ENCODE measurements at regions of chr13 and their contacts with region 1.

Region 1: GRCh38 chr13:75876360-75877050 is 240.4 kb downstream of the LMO7 start:
- DNase-seq: no peak
- H3K4me3 ChIP-seq: no peak overlapping the region
- H3K27ac ChIP-seq: no peak overlapping the region
- H3K4me1 ChIP-seq: peaks cover 0 to 11% (median 6%) of the 10 kb centered on the region in 6 donors
- H3K27me3 ChIP-seq: peaks cover 0 to 6% (median 0%) of the 10 kb centered on the region in 7 donors
- CTCF ChIP-seq: peak; percentile 60 to 87 (median 83)
- POLR2A ChIP-seq: no peak

Region 2: GRCh38 chr13:75691183-75691582 is 185.3 kb before region 1 on chr13:
- intact Hi-C with region 1: loop called (anchors 10 kb)
- DNase-seq: no peak
- H3K4me3 ChIP-seq: no peak overlapping the region
- H3K27ac ChIP-seq: no peak overlapping the region
- H3K4me1 ChIP-seq: peaks cover 0 to 5% (median 4%) of the 10 kb centered on the region in 6 donors
- H3K27me3 ChIP-seq: no peaks in the 10 kb centered on the region
- CTCF ChIP-seq: no peak
- POLR2A ChIP-seq: no peak

Region 3: DNA sequence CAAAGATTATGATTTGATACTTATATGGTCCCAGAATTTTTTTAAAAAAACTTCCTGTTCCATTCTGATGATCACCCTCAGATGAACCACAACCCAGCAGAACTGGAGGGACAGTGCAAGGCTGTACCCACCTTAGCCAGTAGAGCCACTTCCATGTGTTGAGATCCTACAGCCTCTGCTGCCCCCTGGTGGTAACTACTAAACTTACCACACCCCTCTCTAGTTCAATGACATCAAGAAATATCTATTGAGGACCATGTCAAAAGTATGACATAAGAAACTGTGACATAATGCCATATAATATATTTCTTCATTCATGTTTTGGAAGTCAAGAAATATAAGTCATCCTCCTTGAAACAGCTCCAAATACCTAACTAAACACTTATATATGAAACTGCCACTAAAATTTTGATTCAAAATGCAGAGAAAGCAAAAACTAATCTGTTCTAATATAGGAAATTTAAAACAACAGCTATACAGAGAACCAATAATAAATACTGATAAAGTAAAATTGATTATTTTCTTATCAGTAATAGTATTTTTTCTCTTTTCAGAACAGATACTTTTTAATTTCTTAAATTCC is 597.1 kb after region 1 on chr13:
- intact Hi-C with region 1: loop called (anchors 5 kb)
- DNase-seq: no peak
- H3K4me3 ChIP-seq: no peak overlapping the region
- H3K27ac ChIP-seq: no peak overlapping the region
- H3K4me1 ChIP-seq: no peaks in the 10 kb centered on the region
- H3K27me3 ChIP-seq: no peaks in the 10 kb centered on the region
- CTCF ChIP-seq: peak; percentile 54 to 84 (median 75)
- POLR2A ChIP-seq: no peak

Region 4: DNA sequence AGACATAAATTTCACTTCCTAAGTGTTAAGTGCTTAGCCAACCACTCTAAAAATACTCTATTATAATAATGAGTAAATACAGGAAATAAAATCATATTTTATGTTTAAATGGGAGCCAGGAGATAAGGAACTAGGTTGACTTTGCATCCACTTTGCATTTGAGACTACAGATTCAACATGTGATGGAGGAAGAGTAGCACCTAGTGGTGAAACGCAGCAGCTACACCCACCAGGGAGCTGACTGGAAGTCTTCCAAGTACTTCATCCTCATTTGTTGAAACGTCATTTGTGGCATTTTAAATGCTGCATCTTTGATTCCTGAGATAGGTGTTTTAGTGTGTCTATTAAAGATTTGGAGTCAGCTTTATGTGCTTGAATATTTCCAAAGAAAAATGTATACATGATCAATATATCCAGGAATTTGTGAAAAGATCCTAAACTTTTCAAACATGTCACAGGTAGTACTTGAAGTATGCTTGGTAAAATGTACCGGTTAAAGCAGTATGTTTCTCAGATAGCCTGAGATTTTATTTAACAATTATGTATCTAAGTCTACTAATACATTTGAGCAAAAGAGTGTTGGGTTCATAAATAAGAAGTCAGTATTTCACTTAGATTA is 1027.1 kb after region 1 on chr13:
- intact Hi-C with region 1: loop called (anchors 5 kb)
- DNase-seq: peak; percentile 83
- H3K4me3 ChIP-seq: no peak overlapping the region
- H3K27ac ChIP-seq: no peak overlapping the region
- H3K4me1 ChIP-seq: peaks cover 0 to 8% (median 2%) of the 10 kb centered on the region in 6 donors
- H3K27me3 ChIP-seq: peaks cover 0 to 9% (median 0%) of the 10 kb centered on the region in 7 donors
- CTCF ChIP-seq: peak; percentile 91 to 98 (median 95)
- POLR2A ChIP-seq: no peak

Region 5: DNA sequence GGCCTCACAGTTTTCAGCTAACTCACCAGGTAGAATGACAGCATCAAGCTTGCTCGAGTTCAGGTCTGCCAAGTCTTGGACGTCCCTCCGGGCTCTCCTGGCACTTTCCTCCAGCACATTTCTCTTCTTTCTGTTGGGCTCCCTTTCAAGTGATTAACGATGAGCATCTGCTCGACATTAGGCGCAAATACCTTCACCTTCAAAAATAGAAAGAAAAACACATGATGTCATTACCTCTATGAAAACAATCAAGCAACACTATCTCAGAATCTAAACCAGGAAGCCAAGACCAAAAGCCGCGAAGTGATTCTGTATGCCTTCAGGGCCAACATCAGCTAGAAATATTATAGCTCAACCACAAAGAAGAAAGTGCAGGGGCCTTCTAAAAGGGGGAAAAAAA is 1100.0 kb after region 1 on chr13:
- intact Hi-C with region 1: loop called (anchors 10 kb)
- DNase-seq: no peak
- H3K4me3 ChIP-seq: no peak overlapping the region
- H3K27ac ChIP-seq: no peak overlapping the region
- H3K4me1 ChIP-seq: peaks cover 4 to 23% (median 13%) of the 10 kb centered on the region in 6 donors
- H3K27me3 ChIP-seq: peaks cover 0 to 63% (median 8%) of the 10 kb centered on the region in 7 donors
- CTCF ChIP-seq: no peak
- POLR2A ChIP-seq: no peak